ENCODE measurements at regions of chr10 and their contacts with region 1.

Region 1: DNA sequence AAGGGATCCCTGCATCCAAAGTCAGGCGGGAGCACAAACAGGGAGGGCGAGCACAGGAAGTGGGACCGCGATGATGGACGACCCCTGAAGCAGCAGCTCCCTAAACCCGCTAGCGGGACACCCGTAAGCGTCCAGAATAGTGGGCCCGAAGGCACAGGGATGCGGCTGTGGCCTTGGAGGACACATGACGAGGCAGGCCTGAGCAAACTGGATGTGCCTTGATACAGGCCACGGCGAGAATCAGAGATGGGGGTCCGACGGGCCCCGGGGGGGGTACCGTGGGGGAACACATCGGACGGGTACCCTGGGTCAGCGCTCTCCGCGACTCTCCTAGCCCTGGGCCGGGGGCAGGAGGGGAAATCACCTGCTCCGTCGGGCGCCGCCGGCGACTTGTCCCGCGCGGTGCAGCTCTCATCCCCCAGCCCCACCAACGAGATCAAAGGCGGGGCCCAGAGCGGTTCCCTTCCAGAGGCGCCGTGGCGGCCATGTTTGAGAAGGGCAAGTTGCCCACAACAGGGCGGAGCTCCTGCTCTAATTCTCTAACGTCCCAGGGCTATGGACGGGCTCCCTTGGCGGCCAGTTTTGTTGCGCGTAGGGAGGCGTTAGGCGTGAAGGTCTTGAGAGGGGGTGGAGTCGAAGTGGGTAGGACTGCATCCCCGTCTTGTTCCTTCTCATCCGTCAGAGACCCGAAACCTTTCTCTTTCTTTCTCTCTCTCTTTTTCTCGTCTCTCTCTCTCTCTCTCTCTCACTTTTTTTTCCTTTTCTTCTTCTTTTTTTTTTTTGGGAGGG is at the start of gene CUEDC2:
- DNase-seq: peak; percentile 88 to 98 (median 93)
- ATAC-seq: peak; percentile 93
- H3K4me3 ChIP-seq: peak within 1 kb of the TSS; percentile 76 to 96
- H3K4me3 Mint-ChIP-seq: peak within 1 kb of the TSS; percentile 95
- H3K27ac ChIP-seq: peak within 1 kb of the TSS; percentile 62 to 67
- H3K27ac Mint-ChIP-seq: peak within 1 kb of the TSS; percentile 89
- H3K4me1 ChIP-seq: peaks cover 48% of the 10 kb centered on the region
- H3K4me1 Mint-ChIP-seq: peaks cover 49% of the 10 kb centered on the region
- H3K27me3 ChIP-seq: no peaks in the 10 kb centered on the region
- H3K27me3 Mint-ChIP-seq: no peaks in the 10 kb centered on the region
- CTCF ChIP-seq: no peak
- total RNA-seq, gene CUEDC2: 24.2 to 27.0 TPM

Region 2: GRCh38 chr10:102055647-102056419 is 376.5 kb before region 1 on chr10 and contains the start of gene ARMH3:
- CTCF ChIA-PET with region 1: no interaction called
- POLR2A ChIA-PET with region 1: no interaction called
- intact Hi-C with region 1: loop called (anchors 10 kb)
- DNase-seq: peak; percentile 75 to 95 (median 87)
- ATAC-seq: peak; percentile 93
- H3K4me3 ChIP-seq: peak within 1 kb of the TSS; percentile 93 to 94
- H3K4me3 Mint-ChIP-seq: peak within 1 kb of the TSS; percentile 97
- H3K27ac ChIP-seq: peak within 1 kb of the TSS; percentile 79 to 90
- H3K27ac Mint-ChIP-seq: peak within 1 kb of the TSS; percentile 95
- H3K4me1 ChIP-seq: peaks cover 40% of the 10 kb centered on the region
- H3K4me1 Mint-ChIP-seq: peaks cover 42% of the 10 kb centered on the region
- H3K27me3 ChIP-seq: no peaks in the 10 kb centered on the region
- H3K27me3 Mint-ChIP-seq: no peaks in the 10 kb centered on the region
- CTCF ChIP-seq: no peak
- total RNA-seq, gene ARMH3: 18.6 to 20.6 TPM

Region 3: GRCh38 chr10:102399217-102400089 is 32.9 kb before region 1 on chr10:
- CTCF ChIA-PET with region 1: interaction called, 11 read pairs
- POLR2A ChIA-PET with region 1: interaction called, 5 read pairs
- intact Hi-C with region 1: loop called (anchors 1 kb)
- DNase-seq: peak; percentile 78 to 95 (median 87)
- ATAC-seq: peak; percentile 51
- H3K4me3 ChIP-seq: peak overlapping the region; percentile 44 to 65
- H3K4me3 Mint-ChIP-seq: peak overlapping the region; percentile 76
- H3K27ac ChIP-seq: peak overlapping the region; percentile 59 to 86
- H3K27ac Mint-ChIP-seq: peak overlapping the region; percentile 81
- H3K4me1 ChIP-seq: peaks cover 30% of the 10 kb centered on the region
- H3K4me1 Mint-ChIP-seq: peaks cover 38% of the 10 kb centered on the region
- H3K27me3 ChIP-seq: no peaks in the 10 kb centered on the region
- H3K27me3 Mint-ChIP-seq: no peaks in the 10 kb centered on the region
- CTCF ChIP-seq: peak; percentile 89

Region 4: GRCh38 chr10:102450194-102450938 is 18.0 kb after region 1 on chr10:
- CTCF ChIA-PET with region 1: interaction called, 3 read pairs
- POLR2A ChIA-PET with region 1: interaction called, 76 read pairs
- intact Hi-C with region 1: loop called (anchors 1 kb)
- DNase-seq: peak; percentile 78 to 98 (median 89)
- ATAC-seq: peak; percentile 77
- H3K4me3 ChIP-seq: peak overlapping the region; percentile 73 to 92
- H3K4me3 Mint-ChIP-seq: peak overlapping the region; percentile 92
- H3K27ac ChIP-seq: peak overlapping the region; percentile 76 to 88
- H3K27ac Mint-ChIP-seq: peak overlapping the region; percentile 94
- H3K4me1 ChIP-seq: peaks cover 16% of the 10 kb centered on the region
- H3K4me1 Mint-ChIP-seq: peaks cover 23% of the 10 kb centered on the region
- H3K27me3 ChIP-seq: no peaks in the 10 kb centered on the region
- H3K27me3 Mint-ChIP-seq: no peaks in the 10 kb centered on the region
- CTCF ChIP-seq: no peak